ENCODE measurements at regions of chr19 and their contacts with region 1.

Region 1: DNA sequence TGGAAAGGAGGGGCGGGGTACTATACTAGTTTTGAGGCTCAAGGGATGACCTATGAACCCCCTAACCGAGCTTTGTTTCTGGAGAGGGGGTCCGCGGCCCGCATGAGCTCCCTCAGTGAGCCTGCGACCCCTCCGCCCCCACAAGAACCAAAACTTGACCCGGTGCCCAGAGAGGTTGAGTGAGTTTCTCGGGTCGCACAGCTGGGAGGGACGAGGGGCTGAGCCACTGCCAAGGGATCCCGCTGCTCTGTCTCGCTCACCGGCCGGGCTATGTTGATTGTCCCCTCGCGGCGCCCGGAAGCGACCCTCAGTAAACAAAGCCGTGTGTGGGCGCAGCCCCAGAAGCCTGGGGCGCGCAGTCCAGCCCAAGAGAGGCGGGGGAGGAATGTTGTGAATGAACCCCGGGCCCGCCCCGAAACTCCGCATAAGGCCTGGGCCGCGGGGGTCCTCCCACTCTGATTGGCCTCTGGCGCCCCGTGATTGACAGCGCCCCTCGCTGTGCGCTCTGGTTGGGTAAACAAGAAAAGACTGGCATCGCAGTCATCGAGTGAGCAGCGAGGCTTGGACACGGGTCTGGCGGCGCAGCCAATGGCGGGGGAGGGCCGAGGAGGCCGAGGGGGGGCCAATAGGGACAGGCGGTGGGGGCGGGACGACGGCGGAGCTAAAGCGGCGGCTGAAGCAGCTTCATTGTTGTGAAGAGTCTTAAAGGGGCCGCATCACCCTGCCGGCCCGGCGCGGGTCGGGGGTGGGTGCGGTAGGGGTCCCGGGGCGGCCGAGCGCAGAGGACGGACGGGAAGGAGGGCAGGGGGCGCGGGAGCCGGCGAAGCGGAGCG is at the start of gene ZSWIM4:
- DNase-seq: peak; percentile 97 to 99
- H3K4me3 ChIP-seq: peak within 1 kb of the TSS; percentile 59 to 81 (median 64)
- H3K27ac ChIP-seq: peak within 1 kb of the TSS; percentile 92
- H3K4me1 ChIP-seq: peaks cover 0 to 7% (median 4%) of the 10 kb centered on the region in 4 experiments; a peak in 4 of 7 replicates
- H3K27me3 ChIP-seq: no peaks in the 10 kb centered on the region
- CTCF ChIP-seq: no peak
- EP300 ChIP-seq: peak; percentile 33 to 96
- POLR2A ChIP-seq: peak; percentile 79 to 80
- RAD21 ChIP-seq: no peak; a peak in 1 of 4 replicates
- total RNA-seq, gene ZSWIM4: 31.1 and 32.7 TPM in 2 replicates

Region 2: DNA sequence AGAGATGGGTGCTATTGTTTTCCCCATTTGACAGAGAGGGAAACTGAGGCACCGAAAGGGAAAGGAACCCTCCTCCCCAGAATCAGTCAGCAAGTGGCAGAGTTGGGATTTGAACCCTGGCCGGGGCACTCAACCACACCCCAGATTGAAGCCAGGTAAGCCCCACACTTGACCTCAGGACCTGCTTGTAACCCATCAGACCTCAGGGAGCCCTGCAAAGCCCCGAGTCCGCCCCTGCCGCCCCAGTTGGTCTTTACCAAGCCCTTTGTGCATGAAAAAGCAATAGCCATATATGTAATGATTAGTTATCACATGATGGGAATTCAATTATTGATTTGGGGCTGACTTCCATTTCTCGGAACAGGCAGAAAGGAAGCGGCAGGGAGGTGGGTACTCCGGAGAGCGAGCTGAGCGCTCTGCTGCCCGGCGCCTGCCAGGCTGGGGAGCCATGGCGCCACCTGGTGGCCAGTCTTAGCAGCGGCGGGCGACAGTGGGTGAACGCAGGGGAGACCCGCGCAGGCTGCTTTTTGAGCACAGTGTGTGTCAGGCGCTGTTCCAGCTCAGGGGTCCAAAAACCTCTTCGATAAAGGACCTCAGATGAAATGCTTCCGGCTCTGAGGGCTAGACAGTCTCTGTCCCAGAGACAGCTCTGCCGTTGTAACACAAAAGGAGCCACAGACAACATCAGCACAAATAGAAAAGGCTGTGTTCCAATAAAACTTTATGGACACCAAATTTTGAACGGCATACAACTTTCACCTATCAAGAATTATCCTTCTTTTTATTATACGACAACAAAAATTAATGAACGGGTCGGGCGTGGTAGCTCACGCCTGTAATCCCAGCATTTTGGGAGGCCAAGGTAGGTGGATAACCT is 205.8 kb before region 1 on chr19:
- CTCF ChIA-PET with region 1: no interaction called
- POLR2A ChIA-PET with region 1: no interaction called
- DNase-seq: peak; percentile 36 to 97
- H3K4me3 ChIP-seq: no peak overlapping the region
- H3K27ac ChIP-seq: no peak overlapping the region
- H3K4me1 ChIP-seq: no peaks in the 10 kb centered on the region
- H3K27me3 ChIP-seq: no peaks in the 10 kb centered on the region
- CTCF ChIP-seq: peak; percentile 90 to 95 (median 94)
- EP300 ChIP-seq: no peak
- POLR2A ChIP-seq: no peak
- RAD21 ChIP-seq: peak; percentile 88 to 93

Region 3: GRCh38 chr19:13784731-13785452 is 10.1 kb before region 1 on chr19:
- CTCF ChIA-PET with region 1: interaction called, 42 read pairs
- POLR2A ChIA-PET with region 1: interaction called, 56 read pairs
- DNase-seq: peak in 1 of 2 experiments; percentile 88
- H3K4me3 ChIP-seq: peak overlapping the region in 1 of 4 experiments; percentile 7; a peak in 1 of 8 replicates
- H3K27ac ChIP-seq: 0 out of 2 replicates have a peak overlapping the region, but pooled peaks have one; percentile 11
- H3K4me1 ChIP-seq: peaks cover 0 to 3% (median 2%) of the 10 kb centered on the region in 4 experiments; a peak in 4 of 7 replicates
- H3K27me3 ChIP-seq: no peaks in the 10 kb centered on the region; a peak in 2 of 7 replicates
- CTCF ChIP-seq: peak; percentile 65 to 82 (median 80)
- EP300 ChIP-seq: no peak; a peak in 1 of 3 replicates
- POLR2A ChIP-seq: no peak
- RAD21 ChIP-seq: peak; percentile 78 to 82

Region 4: GRCh38 chr19:13817615-13818371 is 22.8 kb after region 1 on chr19:
- CTCF ChIA-PET with region 1: interaction called, 9 read pairs
- POLR2A ChIA-PET with region 1: interaction called, 55 read pairs
- DNase-seq: peak; percentile 93 to 98
- H3K4me3 ChIP-seq: peak overlapping the region; percentile 49 to 75 (median 58)
- H3K27ac ChIP-seq: peak overlapping the region; percentile 93
- H3K4me1 ChIP-seq: peaks cover 0 to 5% (median 4%) of the 10 kb centered on the region in 4 experiments; a peak in 5 of 7 replicates
- H3K27me3 ChIP-seq: no peaks in the 10 kb centered on the region
- CTCF ChIP-seq: no peak
- EP300 ChIP-seq: peak in 1 of 2 experiments; percentile 64; a peak in 1 of 3 replicates
- POLR2A ChIP-seq: peak; percentile 69 to 75
- RAD21 ChIP-seq: peak in 1 of 2 experiments; percentile 4; a peak in 1 of 4 replicates

Region 5: GRCh38 chr19:13846557-13847406 is 51.8 kb after region 1 on chr19:
- CTCF ChIA-PET with region 1: interaction called, 12 read pairs
- POLR2A ChIA-PET with region 1: interaction called, 60 read pairs
- DNase-seq: peak in 1 of 2 experiments; percentile 98
- H3K4me3 ChIP-seq: peak overlapping the region; percentile 52 to 78 (median 64); a peak in 7 of 8 replicates
- H3K27ac ChIP-seq: peak overlapping the region; percentile 97
- H3K4me1 ChIP-seq: peaks cover 6 to 38% (median 30%) of the 10 kb centered on the region in 4 experiments
- H3K27me3 ChIP-seq: no peaks in the 10 kb centered on the region
- CTCF ChIP-seq: no peak
- EP300 ChIP-seq: peak in 1 of 2 experiments; percentile 89; a peak in 1 of 3 replicates
- POLR2A ChIP-seq: peak in 1 of 2 experiments; percentile 84; a peak in 2 of 3 replicates
- RAD21 ChIP-seq: no peak

Region 6: DNA sequence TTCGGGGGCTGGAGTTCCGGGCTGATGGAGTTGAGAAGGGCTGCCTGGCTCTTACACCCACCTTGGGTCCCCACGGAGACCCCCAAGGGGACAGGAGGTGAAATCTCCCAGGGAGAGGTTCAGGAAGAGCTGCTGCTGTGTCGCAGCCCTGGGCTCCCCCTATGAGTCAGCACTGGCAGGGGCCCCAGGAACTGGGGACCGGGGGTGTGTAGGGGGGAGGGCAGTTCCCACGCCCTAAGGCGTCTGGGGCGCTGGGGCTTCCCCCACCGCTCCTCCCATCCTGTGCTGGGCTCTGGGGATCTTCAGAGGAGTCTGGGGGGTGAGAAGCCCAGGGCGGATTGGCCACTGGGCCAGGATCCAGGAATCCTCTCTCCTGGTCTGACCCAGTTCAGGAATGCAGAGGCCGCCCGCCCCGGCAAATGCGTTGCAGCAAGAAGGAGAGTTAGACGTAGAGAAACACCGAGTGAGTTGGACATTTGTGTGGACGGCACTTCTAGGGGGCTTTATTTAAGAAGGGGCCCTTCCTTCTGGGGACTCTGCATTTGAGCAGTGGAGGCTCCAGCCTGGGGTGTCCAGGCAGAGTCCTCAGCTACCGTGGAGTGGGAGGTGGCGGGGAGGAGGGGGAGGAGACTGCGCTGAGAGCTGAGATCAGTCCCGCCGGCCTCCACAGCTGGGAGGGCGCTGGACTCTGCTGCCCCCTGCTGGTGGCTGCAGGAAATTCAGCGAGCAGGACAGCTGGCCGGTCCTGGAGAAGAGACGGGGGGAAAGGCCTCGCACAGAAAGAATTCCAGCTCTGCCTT is 67.0 kb after region 1 on chr19:
- CTCF ChIA-PET with region 1: interaction called, 24 read pairs
- POLR2A ChIA-PET with region 1: interaction called, 11 read pairs
- DNase-seq: peak in 1 of 2 experiments; percentile 99
- H3K4me3 ChIP-seq: peak overlapping the region; percentile 14 to 60 (median 40); a peak in 6 of 8 replicates
- H3K27ac ChIP-seq: no peak overlapping the region
- H3K4me1 ChIP-seq: peaks cover 4 to 7% (median 5%) of the 10 kb centered on the region in 4 experiments; a peak in 6 of 7 replicates
- H3K27me3 ChIP-seq: peaks cover 15 to 32% (median 24%) of the 10 kb centered on the region in 4 experiments
- CTCF ChIP-seq: peak; percentile 92 to 96 (median 94)
- EP300 ChIP-seq: 0 out of 3 replicates have a peak, but pooled peaks of 1 of the 2 experiments have one; percentile 44
- POLR2A ChIP-seq: 0 out of 3 replicates have a peak, but pooled peaks of 1 of the 2 experiments have one; percentile 15
- RAD21 ChIP-seq: peak; percentile 90 to 91

Region 7: DNA sequence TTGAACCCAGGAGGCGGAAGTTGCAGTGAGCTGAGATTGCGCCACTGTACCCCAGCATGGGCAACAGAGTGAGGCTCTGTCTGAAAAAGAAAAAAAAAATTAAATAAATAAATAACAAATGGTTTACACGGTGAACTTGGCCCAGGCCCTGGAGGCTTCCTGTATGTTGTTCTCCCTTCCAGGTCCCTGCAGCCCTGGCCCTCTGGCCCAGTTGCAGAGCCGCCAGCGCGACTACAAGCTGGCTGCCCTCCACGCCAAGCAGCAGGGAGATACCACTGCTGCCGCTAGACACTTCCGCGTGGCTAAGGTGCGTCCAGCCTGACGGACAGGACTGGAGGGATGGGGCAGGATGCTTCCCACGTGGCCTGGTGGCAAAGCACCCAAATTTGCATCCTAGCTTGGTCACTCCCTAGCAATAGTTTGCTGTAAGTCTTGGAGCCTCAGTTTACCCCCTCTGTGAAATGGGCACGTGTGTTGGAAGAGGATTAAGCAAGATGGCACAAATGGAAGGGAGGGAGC is 123.0 kb after region 1 on chr19:
- CTCF ChIA-PET with region 1: no interaction called
- POLR2A ChIA-PET with region 1: no interaction called
- DNase-seq: no peak
- H3K4me3 ChIP-seq: no peak overlapping the region
- H3K27ac ChIP-seq: no peak overlapping the region
- H3K4me1 ChIP-seq: no peaks in the 10 kb centered on the region
- H3K27me3 ChIP-seq: no peaks in the 10 kb centered on the region
- CTCF ChIP-seq: no peak
- EP300 ChIP-seq: no peak
- POLR2A ChIP-seq: no peak
- RAD21 ChIP-seq: no peak